GM18951 (cell line): ENCODE measurements at regions of chr3 and their contacts with region 1.

Region 1: DNA sequence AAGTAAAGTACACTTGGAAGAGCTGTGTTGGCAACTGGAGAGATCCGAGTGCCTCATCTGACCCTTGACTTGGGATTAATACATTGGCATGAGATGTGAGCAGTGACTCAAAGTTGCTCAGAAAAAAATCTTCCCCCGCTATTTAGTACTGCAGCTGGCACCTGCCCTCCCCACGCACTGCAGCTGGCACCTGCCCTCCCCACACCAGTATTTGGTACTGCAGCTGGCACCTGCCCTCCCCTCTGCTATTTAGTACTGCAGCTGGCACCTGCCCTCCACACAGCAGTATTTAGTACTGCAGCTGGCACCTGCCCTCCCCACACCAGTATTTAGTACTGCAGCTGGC is 3.9 kb upstream of the MUC20 start:
- POLR2A ChIP-seq: no peak

Region 2: DNA sequence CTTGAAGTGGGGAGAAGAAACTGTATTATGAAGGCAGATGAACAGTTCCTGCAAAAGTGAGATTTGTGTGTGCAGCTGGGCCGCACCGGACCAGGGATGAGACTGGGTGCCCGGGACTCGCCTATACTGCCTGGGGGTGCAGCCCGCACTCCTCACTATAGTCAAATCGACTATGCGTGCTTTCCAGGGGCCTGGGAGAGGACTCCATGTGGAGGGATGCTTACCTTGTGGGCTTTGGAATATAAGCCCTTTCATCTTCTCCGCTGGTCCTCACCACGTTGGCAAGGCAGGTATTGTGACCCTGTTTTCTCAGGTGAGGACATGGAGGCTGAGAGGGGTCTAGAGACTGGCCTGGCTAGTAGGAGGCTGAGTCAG is 100.1 kb before region 1 on chr3:
- in situ Hi-C with region 1: loop called (anchors 5 kb)
- POLR2A ChIP-seq: no peak